ENCODE measurements at regions of chr9 and their contacts with region 1.

Region 1: DNA sequence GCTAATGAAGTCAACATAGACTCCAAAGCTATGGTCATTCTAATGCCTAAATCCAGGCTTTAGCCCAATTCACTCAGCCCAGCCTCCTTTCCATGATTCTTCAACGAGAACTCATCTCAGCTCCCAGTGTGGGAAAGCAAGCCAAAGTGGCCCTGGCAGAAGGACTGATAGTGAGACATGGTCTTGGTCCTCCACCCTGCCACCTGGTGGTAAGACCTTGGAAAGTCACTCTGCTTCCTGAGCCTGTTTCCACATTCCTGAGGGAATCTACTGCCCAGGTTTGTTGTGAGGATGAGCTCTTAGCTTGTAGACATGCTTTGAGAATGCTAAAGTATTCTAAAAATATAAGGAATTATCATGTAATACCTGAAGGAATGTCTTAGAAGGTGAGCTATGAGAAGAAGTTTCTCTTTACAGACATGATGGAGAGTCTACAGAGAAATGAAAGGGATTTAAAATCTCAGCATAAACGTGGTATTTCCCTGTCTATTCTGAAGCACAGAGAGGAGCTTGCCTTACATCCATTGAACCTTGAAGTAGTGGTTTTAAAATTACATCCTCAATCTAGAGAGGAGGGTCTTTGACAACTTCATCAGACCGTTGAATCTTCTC is 173.5 kb downstream of the TRIM32 start:
- DNase-seq: peak; percentile 2
- H3K4me3 ChIP-seq: no peak overlapping the region
- CTCF ChIP-seq: peak; percentile 83

Region 2: DNA sequence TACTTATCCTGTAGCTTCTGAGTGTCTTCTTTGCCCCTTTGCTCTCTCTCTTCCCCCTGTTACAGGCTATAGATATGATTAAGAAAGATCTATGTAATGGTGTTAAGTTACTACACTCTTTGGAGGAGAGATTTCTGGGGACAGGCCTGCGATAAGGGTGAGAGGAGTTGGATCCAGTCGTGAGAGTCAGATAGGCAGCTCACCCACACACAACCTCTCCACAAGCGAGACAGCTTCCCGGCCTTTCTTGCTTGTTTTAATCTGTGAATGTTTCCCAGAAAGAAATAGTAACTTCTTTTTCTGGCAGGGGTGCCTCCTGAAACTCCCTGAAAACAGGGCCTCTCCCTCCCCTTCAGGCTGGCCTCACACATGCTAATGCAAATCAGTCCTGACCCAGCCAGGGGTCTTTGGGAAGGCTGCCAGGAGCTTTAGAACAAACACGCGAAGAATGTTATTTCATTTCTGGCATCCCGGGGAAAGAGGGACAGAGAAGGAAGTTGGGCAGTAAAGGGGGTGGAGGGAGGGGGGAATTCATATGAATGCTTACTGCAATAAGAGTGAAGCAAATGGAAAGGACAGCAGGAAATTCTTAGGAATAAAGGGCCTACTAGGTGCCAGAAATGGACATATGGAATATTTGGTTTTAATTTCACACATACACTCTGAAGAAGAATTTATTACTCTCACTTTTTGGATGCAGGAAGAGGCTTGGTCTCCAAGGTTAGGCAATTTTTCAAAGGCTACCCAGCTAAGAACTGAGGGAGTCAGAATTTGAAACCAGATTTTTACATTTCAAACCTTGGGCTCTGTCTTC is 389.3 kb before region 1 on chr9:
- CTCF ChIA-PET with region 1: no interaction called
- POLR2A ChIA-PET with region 1: no interaction called
- DNase-seq: no peak
- H3K4me3 ChIP-seq: no peak overlapping the region
- CTCF ChIP-seq: no peak

Region 3: GRCh38 chr9:116724123-116724522 is 136.5 kb before region 1 on chr9:
- CTCF ChIA-PET with region 1: interaction called, 11 read pairs
- POLR2A ChIA-PET with region 1: no interaction called
- DNase-seq: no peak
- H3K4me3 ChIP-seq: no peak overlapping the region
- CTCF ChIP-seq: no peak

Region 4: DNA sequence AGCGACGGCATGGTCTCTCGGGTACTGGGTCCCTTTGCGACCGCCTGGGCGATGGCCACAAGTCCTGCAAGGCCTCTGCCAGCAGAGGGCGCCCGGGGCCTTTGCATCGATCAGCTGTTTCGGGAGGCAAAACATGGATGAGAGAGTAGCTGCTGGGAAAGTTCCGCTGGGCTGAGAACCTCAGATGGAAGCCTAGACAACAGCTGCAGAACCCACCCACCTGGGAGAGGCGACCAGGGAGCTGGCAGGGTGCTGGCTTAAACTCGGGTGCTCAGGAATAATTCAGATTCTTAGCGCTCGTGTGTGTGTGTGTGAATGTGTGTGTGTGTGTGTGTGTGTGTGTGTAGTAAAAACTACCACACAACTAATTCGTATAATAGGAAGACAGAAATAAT is 123.5 kb before region 1 on chr9:
- CTCF ChIA-PET with region 1: interaction called, 312 read pairs
- POLR2A ChIA-PET with region 1: no interaction called
- DNase-seq: peak; percentile 29
- H3K4me3 ChIP-seq: peak overlapping the region; percentile 9
- CTCF ChIP-seq: peak; percentile 98

Region 5: DNA sequence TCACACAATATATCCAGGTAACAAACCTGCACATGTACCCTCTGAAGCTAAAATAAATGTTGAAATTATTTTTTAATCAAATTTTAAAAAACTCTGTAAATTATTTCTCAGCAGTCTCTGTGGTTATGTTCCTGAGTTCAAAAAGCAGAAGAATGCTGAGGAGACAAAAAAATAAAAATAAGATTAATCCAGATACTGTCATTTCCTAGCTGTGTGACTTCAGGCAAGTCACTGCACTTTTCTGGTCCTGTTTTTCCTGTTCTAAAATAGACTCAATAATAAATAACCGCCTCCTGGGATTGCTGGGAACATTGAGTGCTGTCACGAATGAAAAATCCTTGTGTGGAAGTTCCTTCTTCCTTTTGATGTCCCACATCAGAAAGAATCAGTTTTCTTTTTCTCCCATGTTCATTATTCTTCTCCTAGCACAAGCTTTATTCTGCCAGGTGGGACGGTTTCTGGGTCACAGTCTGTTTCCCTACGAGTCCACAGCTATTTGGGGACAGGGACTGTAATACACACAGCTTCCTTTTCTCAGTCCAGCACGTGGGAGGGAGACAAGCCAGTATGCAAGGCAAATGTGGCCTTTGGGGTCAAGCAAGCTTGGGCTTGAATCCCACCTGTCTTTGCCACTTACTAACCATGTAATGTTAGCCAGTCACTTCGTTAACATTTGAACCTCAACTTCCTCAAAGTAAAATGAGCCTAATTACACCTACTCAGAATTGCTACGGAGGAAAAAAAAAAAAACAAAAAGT is 16.6 kb before region 1 on chr9:
- CTCF ChIA-PET with region 1: interaction called, 13 read pairs
- POLR2A ChIA-PET with region 1: no interaction called
- DNase-seq: no peak
- H3K4me3 ChIP-seq: no peak overlapping the region
- CTCF ChIP-seq: no peak

Region 6: GRCh38 chr9:116877072-116877471 is 16.5 kb after region 1 on chr9:
- CTCF ChIA-PET with region 1: interaction called, 51 read pairs
- POLR2A ChIA-PET with region 1: no interaction called
- DNase-seq: no peak
- H3K4me3 ChIP-seq: no peak overlapping the region
- CTCF ChIP-seq: no peak

Region 7: DNA sequence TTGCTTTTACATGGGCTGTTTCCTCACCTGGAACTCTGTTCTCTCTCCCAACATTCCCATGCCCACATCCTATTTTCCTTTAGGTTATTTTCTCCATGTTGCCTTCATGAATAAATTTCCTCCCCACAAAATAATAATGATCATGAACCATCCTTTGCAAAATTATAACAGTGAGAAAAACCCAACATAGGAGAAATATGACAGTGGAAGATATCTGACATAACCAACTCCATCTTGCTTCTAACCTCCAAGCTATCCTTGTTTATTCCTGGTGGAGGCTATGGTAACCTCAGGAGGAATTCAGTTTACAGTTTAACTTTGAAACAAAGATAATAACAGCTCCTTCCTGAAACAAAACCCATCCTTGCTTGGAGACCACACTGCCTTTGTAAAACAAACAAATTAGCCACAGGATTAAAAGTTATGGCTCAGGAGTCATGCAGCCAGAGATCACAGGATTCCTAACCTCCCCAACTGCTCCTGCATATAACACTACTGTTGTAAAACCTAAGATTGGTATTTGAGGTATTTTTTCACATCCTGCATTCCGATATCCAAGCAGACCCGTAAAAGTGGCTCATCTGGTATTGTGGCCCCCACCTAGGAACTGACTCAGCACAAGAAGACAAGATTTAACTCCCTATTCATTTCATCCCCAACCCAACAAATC is 38.9 kb after region 1 on chr9:
- CTCF ChIA-PET with region 1: interaction called, 10 read pairs
- POLR2A ChIA-PET with region 1: no interaction called
- DNase-seq: peak; percentile 26
- H3K4me3 ChIP-seq: no peak overlapping the region
- CTCF ChIP-seq: no peak

Region 8: GRCh38 chr9:116979456-116979855 is 118.8 kb after region 1 on chr9:
- CTCF ChIA-PET with region 1: no interaction called
- POLR2A ChIA-PET with region 1: no interaction called
- DNase-seq: no peak
- H3K4me3 ChIP-seq: no peak overlapping the region
- CTCF ChIP-seq: no peak